Sigmoid colon (tissue), 7 donors: ENCODE measurements at regions of chr19 and their contacts with region 1.

Region 1: DNA sequence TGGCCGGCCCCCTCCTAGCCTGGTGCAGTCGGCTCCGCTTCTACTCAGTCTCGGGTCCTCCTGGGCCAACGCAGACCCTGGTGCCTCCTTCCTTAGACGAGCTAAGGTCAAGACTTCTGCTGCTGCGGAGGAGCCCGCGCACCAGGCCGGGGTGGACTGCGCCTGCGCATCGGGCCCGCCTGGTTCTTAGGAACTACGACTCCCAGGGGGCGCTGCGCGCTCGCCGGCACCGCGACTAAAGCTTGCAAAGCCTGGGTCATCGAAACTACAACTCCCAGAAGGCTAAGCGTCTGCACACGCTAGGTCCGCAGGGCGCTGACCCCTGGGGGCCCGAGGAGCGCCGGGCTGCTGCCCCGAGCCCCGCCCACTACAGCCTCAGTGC is at the start of gene ZNF835:
- DNase-seq: peak; percentile 96
- H3K4me3 ChIP-seq: peak within 1 kb of the TSS; percentile 68 to 85 (median 80)
- H3K27ac ChIP-seq: peak within 1 kb of the TSS; percentile 45 to 73 (median 69)
- H3K4me1 ChIP-seq: peaks cover 0 to 22% (median 14%) of the 10 kb centered on the region in 4 donors
- H3K27me3 ChIP-seq: no peaks in the 10 kb centered on the region
- CTCF ChIP-seq: peak in 2 of 4 experiments; percentile 25 to 42
- EP300 ChIP-seq: no peak
- POLR2A ChIP-seq: peak in 1 of 2 donors; percentile 44
- total RNA-seq, gene ZNF835: 2.8 to 14.3 (median 8.4) TPM

Region 2: GRCh38 chr19:56594783-56595547 is 76.6 kb before region 1 on chr19 and contains the start of gene ZNF71:
- intact Hi-C with region 1: loop called (anchors 5 kb)
- DNase-seq: peak; percentile 93
- H3K4me3 ChIP-seq: peak within 1 kb of the TSS; percentile 80 to 100 (median 90)
- H3K27ac ChIP-seq: peak within 1 kb of the TSS; percentile 71 to 80 (median 79)
- H3K4me1 ChIP-seq: peaks cover 0 to 19% (median 8%) of the 10 kb centered on the region in 4 donors
- H3K27me3 ChIP-seq: no peaks in the 10 kb centered on the region
- CTCF ChIP-seq: no peak
- EP300 ChIP-seq: no peak
- POLR2A ChIP-seq: no peak
- total RNA-seq, gene ZNF71: 10.4 to 18.0 (median 11.1) TPM